Natural killer cell (primary cell): ENCODE measurements at regions of chr6 and their contacts with region 1.

Region 1: GRCh38 chr6:139134817-139135581 is at the start of gene HECA:
- DNase-seq: peak; percentile 99 to 100
- ATAC-seq: peak; percentile 82 to 95 (median 87)
- H3K4me3 ChIP-seq: peak within 1 kb of the TSS; percentile 84
- H3K4me3 Mint-ChIP-seq: peak within 1 kb of the TSS; percentile 88
- H3K27ac ChIP-seq: peak within 1 kb of the TSS; percentile 97
- H3K27ac Mint-ChIP-seq: peak within 1 kb of the TSS; percentile 98
- H3K4me1 ChIP-seq: peaks cover 34% of the 10 kb centered on the region
- H3K4me1 Mint-ChIP-seq: peaks cover 55 to 71% of the 10 kb centered on the region in 2 donors
- H3K27me3 ChIP-seq: no peaks in the 10 kb centered on the region
- H3K27me3 Mint-ChIP-seq: no peaks in the 10 kb centered on the region
- CTCF ChIP-seq: no peak
- total RNA-seq, gene HECA: 76.5 to 80.5 (median 77.6) TPM

Region 2: DNA sequence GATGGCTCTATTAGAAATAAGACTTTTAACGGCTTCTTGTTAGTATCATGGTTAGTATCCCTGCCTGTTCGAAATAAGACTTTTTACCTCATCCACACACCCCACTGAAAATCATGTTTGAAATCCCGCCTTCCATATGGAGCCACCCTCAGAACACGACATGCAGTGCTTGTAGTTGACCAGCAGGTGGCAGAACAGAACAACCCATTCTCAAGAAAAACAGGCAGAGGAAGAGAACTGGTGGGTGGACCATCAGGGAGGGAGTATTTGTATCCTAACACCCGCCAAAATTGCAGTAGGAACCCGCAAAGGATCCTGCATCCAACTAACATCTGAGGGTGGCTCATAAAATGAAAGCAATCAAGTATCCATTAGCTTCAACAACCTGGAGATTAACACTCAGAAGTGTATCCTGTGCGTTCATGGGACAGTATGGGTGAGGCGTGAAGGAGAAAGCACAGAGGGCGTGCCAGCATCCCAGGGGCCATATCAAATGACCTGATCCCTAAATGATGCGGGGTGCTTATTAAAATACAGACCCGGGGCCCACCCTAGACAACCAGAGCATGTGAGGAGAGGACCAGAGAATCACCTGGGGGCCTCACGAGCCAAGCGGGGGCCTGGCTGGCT is 546.1 kb before region 1 on chr6:
- intact Hi-C with region 1: no loop called
- DNase-seq: peak; percentile 29 to 81
- ATAC-seq: peak; percentile 70 to 80 (median 78)
- H3K4me3 ChIP-seq: no peak overlapping the region
- H3K4me3 Mint-ChIP-seq: no peak overlapping the region
- H3K27ac ChIP-seq: no peak overlapping the region
- H3K27ac Mint-ChIP-seq: no peak overlapping the region
- H3K4me1 ChIP-seq: peaks cover 5% of the 10 kb centered on the region
- H3K4me1 Mint-ChIP-seq: peaks cover 14 to 24% of the 10 kb centered on the region in 2 donors
- H3K27me3 ChIP-seq: no peaks in the 10 kb centered on the region
- H3K27me3 Mint-ChIP-seq: peaks cover 0 to 6% of the 10 kb centered on the region in 2 donors
- CTCF ChIP-seq: peak; percentile 86

Region 3: GRCh38 chr6:138773177-138774091 is 361.6 kb before region 1 on chr6 and contains the start of gene CCDC28A:
- intact Hi-C with region 1: loop called (anchors 5 kb)
- DNase-seq: peak; percentile 89 to 97
- ATAC-seq: peak; percentile 87 to 94 (median 89)
- H3K4me3 ChIP-seq: peak within 1 kb of the TSS; percentile 94
- H3K4me3 Mint-ChIP-seq: peak within 1 kb of the TSS; percentile 100
- H3K27ac ChIP-seq: peak within 1 kb of the TSS; percentile 95
- H3K27ac Mint-ChIP-seq: peak within 1 kb of the TSS; percentile 99 to 100
- H3K4me1 ChIP-seq: peaks cover 4% of the 10 kb centered on the region
- H3K4me1 Mint-ChIP-seq: peaks cover 18 to 30% of the 10 kb centered on the region in 2 donors
- H3K27me3 ChIP-seq: no peaks in the 10 kb centered on the region
- H3K27me3 Mint-ChIP-seq: no peaks in the 10 kb centered on the region
- CTCF ChIP-seq: no peak
- total RNA-seq, gene CCDC28A: 22.2 to 25.4 (median 24.3) TPM

Region 4: DNA sequence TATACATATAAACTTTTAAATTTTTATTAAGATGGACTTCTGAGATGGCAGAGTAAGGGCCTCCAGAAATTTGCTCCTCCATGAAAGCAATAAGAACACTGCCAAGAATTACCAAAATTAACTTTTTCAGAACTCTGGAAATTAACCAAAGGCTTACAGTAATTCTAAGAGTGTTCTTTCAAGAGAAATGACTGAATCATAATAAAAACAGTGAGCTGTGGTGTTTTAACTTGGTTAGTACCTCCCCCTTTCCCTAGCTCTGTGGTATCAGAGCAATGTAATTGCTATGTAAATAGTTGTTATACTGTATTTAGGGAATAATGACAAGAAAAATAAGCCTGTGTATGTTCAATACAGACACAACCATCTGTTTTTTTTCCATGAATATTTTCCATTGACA is 18.9 kb after region 1 on chr6:
- intact Hi-C with region 1: loop called (anchors 2 kb)
- DNase-seq: no peak
- ATAC-seq: no peak
- H3K4me3 ChIP-seq: no peak overlapping the region
- H3K4me3 Mint-ChIP-seq: no peak overlapping the region
- H3K27ac ChIP-seq: no peak overlapping the region
- H3K27ac Mint-ChIP-seq: peak overlapping the region in 1 of 2 donors; percentile 15
- H3K4me1 ChIP-seq: peaks cover 32% of the 10 kb centered on the region
- H3K4me1 Mint-ChIP-seq: peaks cover 77 to 79% of the 10 kb centered on the region in 2 donors
- H3K27me3 ChIP-seq: no peaks in the 10 kb centered on the region
- H3K27me3 Mint-ChIP-seq: no peaks in the 10 kb centered on the region
- CTCF ChIP-seq: no peak

Region 5: GRCh38 chr6:139173172-139173571 is 38.2 kb after region 1 on chr6:
- intact Hi-C with region 1: loop called (anchors 5 kb)
- DNase-seq: peak in 1 of 2 donors; percentile 67
- ATAC-seq: peak; percentile 59 to 78 (median 70)
- H3K4me3 ChIP-seq: no peak overlapping the region
- H3K4me3 Mint-ChIP-seq: no peak overlapping the region
- H3K27ac ChIP-seq: no peak overlapping the region
- H3K27ac Mint-ChIP-seq: peak overlapping the region; percentile 57 to 78
- H3K4me1 ChIP-seq: peaks cover 28% of the 10 kb centered on the region
- H3K4me1 Mint-ChIP-seq: peaks cover 72 to 76% of the 10 kb centered on the region in 2 donors
- H3K27me3 ChIP-seq: no peaks in the 10 kb centered on the region
- H3K27me3 Mint-ChIP-seq: no peaks in the 10 kb centered on the region
- CTCF ChIP-seq: no peak

Region 6: DNA sequence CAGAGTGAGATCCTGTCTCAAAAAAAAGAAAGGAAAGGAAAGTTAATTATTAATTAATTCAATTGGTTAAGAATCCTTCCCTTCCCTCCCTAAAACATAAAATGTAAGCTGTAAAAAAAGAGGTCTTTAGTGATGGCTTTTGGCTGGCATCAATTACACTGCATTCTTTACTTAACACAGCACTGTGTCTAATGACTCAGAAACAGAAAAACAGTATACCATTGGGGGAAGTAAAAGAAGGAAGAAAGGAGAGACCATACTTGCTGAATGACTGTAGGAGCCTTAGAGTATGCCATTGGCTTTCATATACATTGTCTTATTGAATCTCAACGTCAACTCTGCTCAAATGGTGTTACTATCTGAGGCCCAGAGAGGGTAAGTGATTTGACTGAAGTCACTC is 257.8 kb after region 1 on chr6:
- intact Hi-C with region 1: no loop called
- DNase-seq: no peak
- ATAC-seq: peak in 1 of 3 donors; percentile 37
- H3K4me3 ChIP-seq: no peak overlapping the region
- H3K4me3 Mint-ChIP-seq: no peak overlapping the region
- H3K27ac ChIP-seq: no peak overlapping the region
- H3K27ac Mint-ChIP-seq: no peak overlapping the region
- H3K4me1 ChIP-seq: no peaks in the 10 kb centered on the region
- H3K4me1 Mint-ChIP-seq: no peaks in the 10 kb centered on the region
- H3K27me3 ChIP-seq: no peaks in the 10 kb centered on the region
- H3K27me3 Mint-ChIP-seq: peaks cover 3 to 11% of the 10 kb centered on the region in 2 donors
- CTCF ChIP-seq: no peak